Right ventricle myocardium inferior (tissue), 1 donor: ENCODE measurements at regions of chr4 and their contacts with region 1.

Region 1: DNA sequence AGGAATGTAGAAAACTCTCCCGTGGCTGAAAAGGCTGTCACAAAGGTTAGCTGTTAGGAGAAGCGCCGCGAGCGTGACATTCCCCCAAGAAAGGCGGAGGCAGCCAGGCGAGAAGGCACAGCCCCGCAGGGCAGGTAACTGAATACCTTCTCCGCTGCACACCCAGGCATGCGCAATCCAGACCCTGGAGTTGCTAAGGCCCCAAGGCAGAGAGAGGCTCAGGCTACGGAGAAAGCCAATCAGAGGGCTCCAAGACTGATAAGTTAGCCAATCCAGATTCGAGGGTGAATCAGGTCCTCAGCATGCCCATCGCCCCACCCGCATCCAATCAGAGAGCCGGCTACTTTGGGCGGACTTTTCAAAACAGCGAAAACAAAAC is 485 bp upstream of the CCNG2 start:
- DNase-seq: peak; percentile 94
- ATAC-seq: peak; percentile 97

Region 2: DNA sequence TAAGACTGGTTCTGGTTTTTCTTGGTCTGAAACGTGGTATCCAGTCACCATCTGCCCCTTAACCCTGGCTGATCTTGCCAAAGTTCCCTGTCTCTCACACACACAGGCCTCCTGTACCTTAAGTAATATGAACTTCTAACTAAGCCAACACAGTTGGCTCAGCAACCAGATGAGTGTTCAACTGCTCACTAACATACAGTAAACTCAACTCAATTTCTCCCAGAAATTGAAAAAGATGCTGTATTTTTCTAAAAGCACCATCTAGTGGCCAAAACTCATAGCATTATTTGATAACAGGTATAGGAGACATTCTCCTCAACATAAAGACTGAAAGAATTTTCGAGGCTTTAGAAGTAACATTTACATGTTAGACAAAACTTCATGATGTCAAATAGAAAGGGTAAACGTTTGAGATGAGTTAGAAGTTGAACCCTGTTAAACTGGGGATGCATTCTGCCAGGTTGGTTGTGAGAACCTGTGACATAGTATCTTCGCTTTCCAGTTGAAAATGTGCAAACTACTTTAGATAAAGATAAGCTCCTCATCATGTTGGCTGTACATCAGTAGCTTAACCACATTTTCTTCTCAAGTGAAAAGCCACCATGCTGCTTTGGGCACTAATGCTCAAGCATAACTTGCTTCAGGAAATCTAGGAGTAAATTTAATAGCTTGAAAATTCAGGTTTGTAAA is 111.9 kb before region 1 on chr4:
- intact Hi-C with region 1: no loop called
- DNase-seq: no peak
- ATAC-seq: peak; percentile 24

Region 3: GRCh38 chr4:77075869-77076799 is 80.4 kb before region 1 on chr4 and contains the start of gene CCNI:
- intact Hi-C with region 1: loop called (anchors 1 kb)
- DNase-seq: peak; percentile 97
- ATAC-seq: peak; percentile 97
- total RNA-seq, gene CCNI: 251 TPM

Region 4: GRCh38 chr4:77254921-77255320 is 98.4 kb after region 1 on chr4:
- intact Hi-C with region 1: no loop called
- DNase-seq: no peak
- ATAC-seq: no peak